Psoas muscle (tissue), 8 donors: ENCODE measurements at regions of chrX and their contacts with region 1.

Region 1: DNA sequence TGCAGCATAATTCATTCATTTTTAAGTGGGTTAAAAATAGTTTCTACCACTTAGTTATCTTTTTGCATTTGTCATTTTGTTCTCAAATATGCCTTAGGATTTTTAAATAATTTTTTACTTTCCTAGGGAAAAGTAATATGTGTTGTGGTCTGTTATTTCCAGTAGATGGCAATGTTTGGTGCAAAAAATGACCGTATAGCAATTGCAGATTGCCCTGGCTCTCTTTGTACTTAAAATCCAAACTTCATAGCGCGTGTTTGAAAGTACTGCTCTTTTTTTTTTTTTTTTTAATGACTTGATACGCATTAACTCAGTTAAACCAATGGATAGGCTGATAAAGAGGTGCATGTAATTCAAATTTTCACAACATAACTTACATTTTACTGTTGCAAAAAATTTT is 74.4 kb upstream of the RBMX start:
- DNase-seq: no peak
- ATAC-seq: no peak
- H3K4me3 ChIP-seq: no peak overlapping the region
- H3K27ac ChIP-seq: no peak overlapping the region
- H3K4me1 ChIP-seq: no peaks in the 10 kb centered on the region
- H3K27me3 ChIP-seq: no peaks in the 10 kb centered on the region
- CTCF ChIP-seq: peak; percentile 40

Region 2: GRCh38 chrX:137194164-137194563 is 239.2 kb after region 1 on chrX:
- intact Hi-C with region 1: loop called in 1 of 2 experiments (anchors 5 kb)
- DNase-seq: no peak
- ATAC-seq: no peak
- H3K4me3 ChIP-seq: no peak overlapping the region
- H3K27ac ChIP-seq: no peak overlapping the region
- H3K4me1 ChIP-seq: no peaks in the 10 kb centered on the region
- H3K27me3 ChIP-seq: no peaks in the 10 kb centered on the region
- CTCF ChIP-seq: peak; percentile 39